ENCODE measurements at regions of chr5 and their contacts with region 1.

Region 1: DNA sequence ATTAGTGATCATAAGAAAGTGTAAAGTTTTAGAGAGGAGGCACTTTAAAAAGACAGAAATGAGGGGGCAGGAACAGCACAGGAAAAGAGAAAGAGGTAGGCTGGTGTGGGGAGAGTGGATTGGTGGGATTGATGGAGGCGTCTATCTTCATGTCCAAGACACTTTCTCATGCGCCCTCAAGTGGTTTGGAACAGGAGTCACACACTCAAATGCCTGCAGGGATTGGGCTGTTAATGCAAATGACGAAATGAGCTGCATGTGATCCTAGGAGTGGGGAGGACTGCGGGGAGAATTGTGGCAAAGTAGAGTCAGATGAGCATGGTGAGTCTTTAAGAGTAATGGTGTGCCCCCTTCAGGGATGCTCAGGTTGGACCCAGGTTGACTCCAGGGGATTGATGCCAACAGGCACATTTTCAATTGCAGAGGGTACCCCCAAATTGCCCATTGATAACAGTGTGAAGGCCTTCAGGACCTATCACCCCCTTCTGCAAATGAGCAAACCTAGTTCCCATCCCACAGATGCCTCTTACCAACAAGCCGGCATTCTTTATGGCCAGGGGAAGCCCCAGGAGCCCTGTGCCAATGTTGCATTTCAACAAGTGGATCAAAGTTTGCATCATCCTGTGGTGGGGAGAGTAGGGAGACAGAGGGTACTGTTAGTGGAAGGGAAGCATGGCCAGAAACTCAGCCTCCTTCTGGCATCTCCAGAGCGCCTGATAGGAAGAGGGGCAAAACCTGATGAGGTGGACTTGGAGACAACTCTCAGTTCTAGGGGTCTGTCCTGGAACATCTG is 5.3 kb downstream of the SLC36A3 start:
- DNase-seq: peak; percentile 26
- ATAC-seq: peak; percentile 98
- H3K4me3 ChIP-seq: no peak overlapping the region
- H3K27ac ChIP-seq: no peak overlapping the region
- H3K4me1 ChIP-seq: no peaks in the 10 kb centered on the region
- H3K27me3 ChIP-seq: no peaks in the 10 kb centered on the region; a peak in 1 of 4 replicates
- CTCF ChIP-seq: peak; percentile 72 to 82 (median 75)
- EP300 ChIP-seq: no peak
- POLR2A ChIP-seq: no peak
- RAD21 ChIP-seq: peak; percentile 83

Region 2: GRCh38 chr5:150022163-150022540 is 1276.1 kb before region 1 on chr5:
- CTCF ChIA-PET with region 1: no interaction called
- POLR2A ChIA-PET with region 1: no interaction called
- RAD21 ChIA-PET with region 1: no interaction called
- SMC1A ChIA-PET with region 1: no interaction called
- in situ Hi-C with region 1: no loop called
- intact Hi-C with region 1: no loop called
- DNase-seq: no peak
- ATAC-seq: no peak
- H3K4me3 ChIP-seq: no peak overlapping the region
- H3K27ac ChIP-seq: no peak overlapping the region
- H3K4me1 ChIP-seq: no peaks in the 10 kb centered on the region
- H3K27me3 ChIP-seq: no peaks in the 10 kb centered on the region
- CTCF ChIP-seq: no peak
- EP300 ChIP-seq: no peak
- POLR2A ChIP-seq: no peak
- RAD21 ChIP-seq: no peak

Region 3: DNA sequence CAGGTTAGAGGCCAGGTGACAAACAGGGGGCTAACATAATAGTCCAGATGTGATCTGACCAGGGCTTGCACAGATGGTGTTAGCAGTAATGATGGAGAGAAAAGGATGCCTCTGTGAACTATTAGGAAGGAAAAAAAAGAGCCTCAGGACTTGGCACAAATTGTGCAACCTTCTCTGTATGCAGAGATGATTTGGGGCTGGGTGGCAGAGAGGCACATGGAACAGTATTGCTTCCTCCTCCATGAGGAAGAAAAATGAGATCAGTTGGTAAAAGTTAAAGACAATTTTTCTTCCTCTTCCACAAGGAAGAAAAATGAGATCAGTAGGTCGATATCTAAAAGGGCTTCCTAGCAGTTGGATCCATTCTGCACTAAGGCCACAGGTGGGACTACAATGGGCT is 126.7 kb before region 1 on chr5:
- CTCF ChIA-PET with region 1: interaction called, 40 read pairs
- POLR2A ChIA-PET with region 1: no interaction called
- RAD21 ChIA-PET with region 1: interaction called, 15 read pairs
- SMC1A ChIA-PET with region 1: interaction called, 49 read pairs
- in situ Hi-C with region 1: no loop called
- intact Hi-C with region 1: no loop called
- DNase-seq: no peak
- ATAC-seq: no peak
- H3K4me3 ChIP-seq: no peak overlapping the region
- H3K27ac ChIP-seq: no peak overlapping the region
- H3K4me1 ChIP-seq: no peaks in the 10 kb centered on the region
- H3K27me3 ChIP-seq: no peaks in the 10 kb centered on the region
- CTCF ChIP-seq: no peak
- EP300 ChIP-seq: no peak
- POLR2A ChIP-seq: no peak
- RAD21 ChIP-seq: no peak

Region 4: GRCh38 chr5:151223469-151224264 is 74.6 kb before region 1 on chr5 and contains the start of gene CCDC69:
- CTCF ChIA-PET with region 1: interaction called, 10 read pairs
- POLR2A ChIA-PET with region 1: no interaction called
- RAD21 ChIA-PET with region 1: interaction called, 5 read pairs
- SMC1A ChIA-PET with region 1: interaction called, 5 read pairs
- in situ Hi-C with region 1: no loop called
- intact Hi-C with region 1: loop called (anchors 5 kb)
- DNase-seq: no peak
- ATAC-seq: peak; percentile 82
- H3K4me3 ChIP-seq: peak within 1 kb of the TSS; percentile 97
- H3K27ac ChIP-seq: peak within 1 kb of the TSS; percentile 89
- H3K4me1 ChIP-seq: peaks cover 24% of the 10 kb centered on the region
- H3K27me3 ChIP-seq: no peaks in the 10 kb centered on the region
- CTCF ChIP-seq: no peak
- EP300 ChIP-seq: no peak
- POLR2A ChIP-seq: peak; percentile 80
- RAD21 ChIP-seq: 0 out of 2 replicates have a peak, but pooled peaks have one; percentile 16
- polyA plus RNA-seq, gene CCDC69: 13.5 to 21.4 TPM

Region 5: DNA sequence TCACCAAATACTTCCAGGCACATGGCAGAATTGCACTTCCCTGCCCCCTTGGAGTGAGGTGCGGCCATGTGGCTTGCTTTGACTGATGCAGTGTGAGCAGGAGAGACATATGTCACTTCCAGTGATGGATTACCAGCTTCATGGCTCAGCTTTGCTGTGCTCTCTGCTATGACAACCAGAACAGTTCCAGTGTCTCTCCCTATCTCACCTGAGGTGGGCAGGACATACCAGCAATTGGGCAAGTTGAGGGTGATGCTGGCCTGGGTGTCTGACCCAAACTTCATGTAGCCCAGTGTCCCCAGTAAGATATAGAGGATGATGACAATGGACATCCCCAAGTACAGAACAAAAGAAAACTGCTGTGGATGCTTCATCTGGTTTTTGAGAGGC is 14.4 kb before region 1 on chr5:
- CTCF ChIA-PET with region 1: interaction called, 10 read pairs
- POLR2A ChIA-PET with region 1: interaction called, 4 read pairs
- RAD21 ChIA-PET with region 1: interaction called, 4 read pairs
- SMC1A ChIA-PET with region 1: interaction called, 4 read pairs
- in situ Hi-C with region 1: no loop called
- intact Hi-C with region 1: no loop called
- DNase-seq: no peak
- ATAC-seq: no peak; the same call in 2 of the 3 replicates
- H3K4me3 ChIP-seq: no peak overlapping the region
- H3K27ac ChIP-seq: no peak overlapping the region
- H3K4me1 ChIP-seq: no peaks in the 10 kb centered on the region
- H3K27me3 ChIP-seq: no peaks in the 10 kb centered on the region
- CTCF ChIP-seq: no peak
- EP300 ChIP-seq: no peak
- POLR2A ChIP-seq: no peak
- RAD21 ChIP-seq: no peak